ENCODE measurements at regions of chr5 and their contacts with region 1.

Region 1: DNA sequence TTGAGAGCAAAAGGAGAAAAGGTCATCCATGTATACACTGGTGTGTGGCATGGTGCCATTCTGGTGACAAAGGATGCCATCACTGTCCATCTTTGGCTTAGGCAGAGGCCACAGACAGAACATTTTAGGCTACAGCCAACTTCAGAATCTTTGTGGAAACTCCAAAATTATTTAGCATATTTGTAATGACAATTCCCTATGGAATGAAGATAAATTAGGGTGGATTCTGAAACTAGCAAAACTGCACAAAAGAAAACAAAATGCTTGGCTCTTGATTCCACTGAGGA is 92.5 kb downstream of the FBXW11 start:
- DNase-seq: no peak
- H3K4me3 Mint-ChIP-seq: no peak overlapping the region
- H3K27ac Mint-ChIP-seq: peak overlapping the region; percentile 67
- H3K4me1 Mint-ChIP-seq: peaks cover 38% of the 10 kb centered on the region
- H3K27me3 Mint-ChIP-seq: no peaks in the 10 kb centered on the region

Region 2: GRCh38 chr5:171418316-171418981 is 495.5 kb before region 1 on chr5:
- CTCF ChIA-PET with region 1: interaction called, 25 read pairs
- POLR2A ChIA-PET with region 1: no interaction called
- intact Hi-C with region 1: no loop called
- DNase-seq: peak; percentile 74
- H3K4me3 Mint-ChIP-seq: peak overlapping the region; percentile 52
- H3K27ac Mint-ChIP-seq: no peak overlapping the region
- H3K4me1 Mint-ChIP-seq: peaks cover 12% of the 10 kb centered on the region
- H3K27me3 Mint-ChIP-seq: peaks cover 14% of the 10 kb centered on the region

Region 3: GRCh38 chr5:172035039-172035438 is 121.1 kb after region 1 on chr5:
- CTCF ChIA-PET with region 1: interaction called, 99 read pairs
- POLR2A ChIA-PET with region 1: no interaction called
- intact Hi-C with region 1: loop called (anchors 1 kb)
- DNase-seq: peak; percentile 27
- H3K4me3 Mint-ChIP-seq: no peak overlapping the region
- H3K27ac Mint-ChIP-seq: no peak overlapping the region
- H3K4me1 Mint-ChIP-seq: peaks cover 12% of the 10 kb centered on the region
- H3K27me3 Mint-ChIP-seq: no peaks in the 10 kb centered on the region

Region 4: GRCh38 chr5:172059661-172060100 is 145.8 kb after region 1 on chr5:
- CTCF ChIA-PET with region 1: interaction called, 39 read pairs
- POLR2A ChIA-PET with region 1: no interaction called
- intact Hi-C with region 1: no loop called
- DNase-seq: no peak
- H3K4me3 Mint-ChIP-seq: no peak overlapping the region
- H3K27ac Mint-ChIP-seq: no peak overlapping the region
- H3K4me1 Mint-ChIP-seq: peaks cover 4% of the 10 kb centered on the region
- H3K27me3 Mint-ChIP-seq: no peaks in the 10 kb centered on the region

Region 5: GRCh38 chr5:172293054-172293744 is 379.3 kb after region 1 on chr5:
- CTCF ChIA-PET with region 1: interaction called, 4 read pairs
- POLR2A ChIA-PET with region 1: no interaction called
- intact Hi-C with region 1: loop called (anchors 5 kb)
- DNase-seq: peak; percentile 72
- H3K4me3 Mint-ChIP-seq: no peak overlapping the region
- H3K27ac Mint-ChIP-seq: no peak overlapping the region
- H3K4me1 Mint-ChIP-seq: no peaks in the 10 kb centered on the region
- H3K27me3 Mint-ChIP-seq: peaks cover 4% of the 10 kb centered on the region